ENCODE measurements at regions of chr2 and their contacts with region 1.

Region 1: GRCh38 chr2:207529330-207530159 is at the start of gene CREB1:
- DNase-seq: peak; percentile 98
- ATAC-seq: peak; percentile 89 to 92
- H3K4me3 ChIP-seq: peak within 1 kb of the TSS; percentile 80 to 93 (median 86)
- H3K27ac ChIP-seq: peak within 1 kb of the TSS; percentile 94 to 95 (median 94)
- H3K4me1 ChIP-seq: peaks cover 29 to 41% of the 10 kb centered on the region in 2 donors
- H3K27me3 ChIP-seq: no peaks in the 10 kb centered on the region
- CTCF ChIP-seq: peak in 1 of 5 experiments; percentile 6
- POLR2A ChIP-seq: peak; percentile 95 to 99
- total RNA-seq, gene CREB1: 11.5 to 19.9 (median 19.8) TPM

Region 2: GRCh38 chr2:206765242-206766056 is 764.1 kb before region 1 on chr2 and contains the starts of genes FASTKD2 and MDH1B:
- in situ Hi-C with region 1: no loop called
- intact Hi-C with region 1: loop called (anchors 2 kb)
- DNase-seq: peak; percentile 83 to 90
- ATAC-seq: peak; percentile 99
- H3K4me3 ChIP-seq: peak within 1 kb of the TSS; percentile 58 to 96 (median 81)
- H3K27ac ChIP-seq: peak within 1 kb of the TSS; percentile 83 to 96 (median 92)
- H3K4me1 ChIP-seq: peaks cover 30 to 43% of the 10 kb centered on the region in 2 donors
- H3K27me3 ChIP-seq: no peaks in the 10 kb centered on the region
- CTCF ChIP-seq: peak in 1 of 5 experiments; percentile 12
- POLR2A ChIP-seq: peak; percentile 57 to 77
- total RNA-seq, gene FASTKD2: 42.9 to 68.6 (median 54.9) TPM
- total RNA-seq, gene MDH1B: 0.13 to 1.6 (median 0.49) TPM

Region 3: DNA sequence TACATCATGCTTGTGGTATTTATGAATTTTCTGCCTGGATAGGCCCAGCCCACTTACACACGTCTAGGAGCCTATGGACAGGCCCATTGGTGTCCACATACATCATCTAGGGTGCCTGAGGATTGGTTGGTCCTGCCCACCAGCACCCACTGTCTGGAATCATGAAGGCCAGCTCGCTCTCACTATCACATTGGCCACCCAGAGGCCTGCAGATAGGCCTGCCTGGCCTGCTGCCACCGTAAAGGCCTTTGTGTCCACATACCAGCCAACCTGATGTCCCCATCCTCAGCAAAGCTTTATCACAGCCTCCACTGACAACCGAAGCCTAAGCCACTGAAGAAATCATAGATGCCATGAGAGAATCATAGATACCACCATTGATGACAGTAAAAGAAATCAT is 55.4 kb after region 1 on chr2:
- in situ Hi-C with region 1: no loop called
- intact Hi-C with region 1: no loop called
- DNase-seq: no peak
- ATAC-seq: no peak
- H3K4me3 ChIP-seq: no peak overlapping the region
- H3K27ac ChIP-seq: no peak overlapping the region
- H3K4me1 ChIP-seq: peaks cover 0 to 2% of the 10 kb centered on the region in 2 donors
- H3K27me3 ChIP-seq: no peaks in the 10 kb centered on the region
- CTCF ChIP-seq: no peak
- POLR2A ChIP-seq: no peak

Region 4: DNA sequence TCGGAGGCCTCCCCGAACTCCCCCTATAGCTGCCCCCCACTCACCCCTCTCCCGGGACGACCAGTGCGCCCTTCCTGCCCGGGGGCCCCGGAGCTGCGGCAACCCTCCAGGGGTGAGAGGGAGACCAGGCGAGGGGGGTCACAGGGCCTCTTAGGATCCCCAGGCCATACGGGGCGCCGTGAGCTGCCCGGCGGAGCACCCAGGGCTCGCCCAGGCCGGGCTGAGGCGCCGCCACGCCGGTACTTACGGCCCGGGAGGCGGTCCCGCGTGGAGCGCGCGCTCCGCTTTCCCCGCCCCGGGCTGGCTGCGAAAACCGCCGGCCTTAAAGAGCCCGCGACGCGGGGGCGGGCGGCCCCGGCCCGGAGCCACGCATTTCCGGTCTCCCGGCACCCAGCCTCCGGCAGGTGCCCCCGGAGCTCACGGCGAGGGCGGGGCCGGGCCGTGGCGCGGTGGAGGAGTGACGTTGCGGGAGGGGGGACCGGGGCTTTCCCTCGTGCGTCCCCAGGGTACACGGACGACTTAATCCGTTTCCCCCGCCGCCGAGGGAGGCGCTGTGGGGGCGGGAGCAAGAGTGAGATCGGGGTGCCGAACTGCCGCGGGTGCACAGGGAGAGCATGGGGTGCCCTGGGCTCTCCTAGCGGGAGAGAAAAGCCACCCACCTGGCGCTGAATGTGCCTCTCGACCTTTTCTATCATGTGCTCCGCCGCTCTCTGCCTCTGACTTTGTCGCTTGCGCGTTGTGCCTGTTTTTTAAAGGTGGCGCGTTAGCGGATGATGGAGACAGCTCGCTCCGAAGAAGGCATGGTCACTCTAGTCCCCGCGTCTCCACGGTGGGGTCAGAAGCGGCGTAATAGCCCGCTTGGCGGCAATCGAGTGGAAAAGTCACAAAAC is 95.7 kb after region 1 on chr2 and contains the start of gene METTL21A:
- in situ Hi-C with region 1: loop called in 1 of 4 experiments (anchors 10 kb)
- intact Hi-C with region 1: loop called (anchors 1 kb)
- DNase-seq: peak; percentile 78 to 88
- ATAC-seq: peak; percentile 79 to 81
- H3K4me3 ChIP-seq: peak within 1 kb of the TSS; percentile 74 to 91 (median 86)
- H3K27ac ChIP-seq: peak within 1 kb of the TSS; percentile 91 to 96 (median 93)
- H3K4me1 ChIP-seq: peaks cover 7 to 11% of the 10 kb centered on the region in 2 donors
- H3K27me3 ChIP-seq: no peaks in the 10 kb centered on the region
- CTCF ChIP-seq: peak in 3 of 5 experiments; percentile 33 to 51 (median 48)
- POLR2A ChIP-seq: peak; percentile 73 to 89
- total RNA-seq, gene METTL21A: 9.1 to 20.8 (median 13.9) TPM

Region 5: GRCh38 chr2:207710814-207711740 is 181.5 kb after region 1 on chr2 and contains the start of gene CCNYL1:
- in situ Hi-C with region 1: loop called in 2 of 4 experiments (anchors 25 kb)
- intact Hi-C with region 1: loop called (anchors 5 kb)
- DNase-seq: peak; percentile 99
- ATAC-seq: peak; percentile 96 to 97
- H3K4me3 ChIP-seq: peak within 1 kb of the TSS; percentile 79 to 95 (median 89)
- H3K27ac ChIP-seq: peak within 1 kb of the TSS; percentile 76 to 88 (median 80)
- H3K4me1 ChIP-seq: peaks cover 18 to 19% of the 10 kb centered on the region in 2 donors
- H3K27me3 ChIP-seq: no peaks in the 10 kb centered on the region
- CTCF ChIP-seq: peak in 4 of 5 experiments; percentile 26 to 52 (median 45)
- POLR2A ChIP-seq: peak; percentile 87 to 98
- total RNA-seq, gene CCNYL1: 3.3 to 10.1 (median 7.1) TPM

Region 6: GRCh38 chr2:208265801-208266552 is 736.4 kb after region 1 on chr2 and contains the start of gene PIKFYVE:
- in situ Hi-C with region 1: loop called in 1 of 4 experiments (anchors 25 kb)
- intact Hi-C with region 1: loop called (anchors 1 kb)
- DNase-seq: peak; percentile 94 to 95
- ATAC-seq: peak; percentile 94 to 97
- H3K4me3 ChIP-seq: peak within 1 kb of the TSS; percentile 71 to 97 (median 96)
- H3K27ac ChIP-seq: peak within 1 kb of the TSS; percentile 91 to 100 (median 98)
- H3K4me1 ChIP-seq: peaks cover 33 to 39% of the 10 kb centered on the region in 2 donors
- H3K27me3 ChIP-seq: no peaks in the 10 kb centered on the region
- CTCF ChIP-seq: peak in 1 of 5 experiments; percentile 18
- POLR2A ChIP-seq: peak; percentile 83 to 88
- total RNA-seq, gene PIKFYVE: 14.0 to 23.9 (median 17.9) TPM

Measured in gastrocnemius medialis (tissue), 4 donors.